ENCODE measurements at regions of chr10 and their contacts with region 1.

Region 1: DNA sequence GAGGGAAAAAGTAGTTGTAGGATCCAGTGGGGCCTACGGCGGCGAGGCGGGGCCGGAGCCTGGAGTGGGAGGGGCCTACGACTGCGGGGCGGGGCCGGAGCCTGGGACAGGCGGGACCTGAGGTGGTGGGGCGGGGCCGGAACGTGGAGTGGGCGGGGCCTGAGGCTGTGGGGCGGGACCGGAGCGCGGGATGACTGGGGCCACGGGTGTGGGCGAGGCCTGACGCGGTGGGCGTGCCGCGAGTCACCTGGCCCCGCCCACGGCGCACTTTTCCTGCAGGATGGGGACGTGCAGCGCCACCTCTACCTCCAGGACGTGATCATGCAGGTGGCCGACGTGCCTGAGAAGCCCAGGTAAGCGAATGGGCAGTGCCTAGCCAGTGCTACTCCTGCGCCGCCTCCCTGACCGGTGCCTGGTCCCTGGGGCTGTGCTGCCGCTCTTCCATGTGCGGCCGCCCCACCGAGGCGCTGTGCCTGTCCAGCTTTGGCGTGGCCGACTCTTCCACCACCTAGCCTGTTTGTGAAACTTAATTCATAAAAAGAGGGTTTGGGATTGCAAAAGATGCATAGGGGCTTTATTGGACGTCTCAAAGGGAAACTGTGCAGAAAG is 501 bp downstream of the ZNF511 start:
- DNase-seq: peak; percentile 91
- H3K4me3 Mint-ChIP-seq: peak overlapping the region; percentile 98
- H3K27ac Mint-ChIP-seq: no peak overlapping the region
- H3K4me1 Mint-ChIP-seq: peaks cover 18% of the 10 kb centered on the region
- H3K27me3 Mint-ChIP-seq: no peaks in the 10 kb centered on the region
- CTCF ChIP-seq: no peak

Region 2: DNA sequence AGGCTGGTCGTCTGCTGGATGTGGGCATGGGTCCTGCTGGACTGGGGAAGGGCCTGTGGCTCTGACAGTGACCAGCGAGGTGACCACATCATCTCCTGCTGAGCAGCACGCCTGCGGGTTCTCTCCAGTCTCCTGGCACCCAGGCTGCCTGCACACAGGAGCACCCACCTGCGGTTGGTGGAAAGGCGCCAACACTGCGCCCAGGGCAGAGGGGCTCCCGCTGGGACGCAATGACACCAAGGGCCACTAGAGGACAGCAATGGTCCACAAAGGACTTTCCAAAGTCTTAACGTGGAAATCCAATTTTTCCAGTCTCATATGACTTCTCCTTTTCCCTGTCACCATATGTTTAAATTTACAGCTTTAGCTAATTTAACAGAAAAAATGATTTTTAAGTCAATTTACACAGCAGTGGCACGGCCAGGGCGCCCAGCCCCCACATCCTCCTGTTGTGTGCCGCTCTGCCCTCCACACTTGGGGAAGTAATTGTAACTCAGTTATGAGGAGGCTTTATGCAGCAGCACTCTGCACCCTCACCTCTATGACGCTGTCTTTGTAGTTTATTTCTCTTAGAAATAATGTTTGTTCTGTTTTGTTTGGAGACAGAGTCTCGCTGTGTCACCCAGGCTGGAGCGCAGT is 404.9 kb before region 1 on chr10:
- CTCF ChIA-PET with region 1: interaction called, 14 read pairs
- POLR2A ChIA-PET with region 1: interaction called, 3 read pairs
- intact Hi-C with region 1: loop called (anchors 5 kb)
- DNase-seq: peak; percentile 64
- H3K4me3 Mint-ChIP-seq: peak overlapping the region; percentile 77
- H3K27ac Mint-ChIP-seq: peak overlapping the region; percentile 86
- H3K4me1 Mint-ChIP-seq: peaks cover 22% of the 10 kb centered on the region
- H3K27me3 Mint-ChIP-seq: no peaks in the 10 kb centered on the region
- CTCF ChIP-seq: peak; percentile 96

Region 3: DNA sequence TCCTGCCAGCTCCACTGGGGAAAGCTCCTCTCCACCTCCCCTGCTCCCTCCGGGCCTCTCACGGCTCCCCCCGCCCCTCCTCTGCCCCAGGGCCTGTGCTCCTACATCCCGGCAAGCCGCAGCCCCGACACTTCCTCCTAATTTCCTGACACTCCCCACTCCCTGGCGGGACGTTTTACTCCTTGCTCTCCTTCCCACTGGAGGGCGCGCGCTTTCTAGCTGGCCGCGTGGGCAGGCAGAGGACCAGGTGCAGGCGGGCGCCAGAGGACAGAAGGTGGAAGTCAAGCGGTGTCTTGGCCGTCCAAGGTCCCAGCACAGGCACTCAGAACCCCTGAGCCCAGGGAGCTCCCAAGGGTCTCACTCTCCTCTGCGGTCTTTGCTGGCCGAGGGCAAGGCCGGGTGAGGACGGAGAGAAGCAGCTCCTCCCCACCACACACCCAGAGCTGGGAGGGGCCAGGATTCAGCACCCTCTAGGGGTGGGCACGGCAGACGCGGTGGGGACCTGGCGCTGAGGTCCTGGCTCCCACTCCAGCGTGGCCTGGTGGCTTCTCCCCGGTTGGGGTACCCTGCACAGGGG is 51.6 kb before region 1 on chr10:
- CTCF ChIA-PET with region 1: interaction called, 12 read pairs
- POLR2A ChIA-PET with region 1: interaction called, 6 read pairs
- intact Hi-C with region 1: loop called (anchors 1 kb)
- DNase-seq: peak; percentile 87
- H3K4me3 Mint-ChIP-seq: peak overlapping the region; percentile 44
- H3K27ac Mint-ChIP-seq: peak overlapping the region; percentile 4
- H3K4me1 Mint-ChIP-seq: peaks cover 33% of the 10 kb centered on the region
- H3K27me3 Mint-ChIP-seq: no peaks in the 10 kb centered on the region
- CTCF ChIP-seq: peak; percentile 40

Region 4: GRCh38 chr10:133287832-133288500 is 21.2 kb before region 1 on chr10:
- CTCF ChIA-PET with region 1: interaction called, 14 read pairs
- POLR2A ChIA-PET with region 1: interaction called, 3 read pairs
- intact Hi-C with region 1: no loop called
- DNase-seq: no peak
- H3K4me3 Mint-ChIP-seq: no peak overlapping the region
- H3K27ac Mint-ChIP-seq: no peak overlapping the region
- H3K4me1 Mint-ChIP-seq: no peaks in the 10 kb centered on the region
- H3K27me3 Mint-ChIP-seq: no peaks in the 10 kb centered on the region
- CTCF ChIP-seq: no peak

Region 5: GRCh38 chr10:133298431-133298830 is 10.8 kb before region 1 on chr10:
- CTCF ChIA-PET with region 1: interaction called, 13 read pairs
- POLR2A ChIA-PET with region 1: interaction called, 5 read pairs
- intact Hi-C with region 1: no loop called
- DNase-seq: no peak
- H3K4me3 Mint-ChIP-seq: no peak overlapping the region
- H3K27ac Mint-ChIP-seq: no peak overlapping the region
- H3K4me1 Mint-ChIP-seq: peaks cover 4% of the 10 kb centered on the region
- H3K27me3 Mint-ChIP-seq: no peaks in the 10 kb centered on the region
- CTCF ChIP-seq: no peak

Measured in MCF 10A (cell line).